AG04450 (cell line): ENCODE measurements at regions of chr14 and their contacts with region 1.

Region 1: DNA sequence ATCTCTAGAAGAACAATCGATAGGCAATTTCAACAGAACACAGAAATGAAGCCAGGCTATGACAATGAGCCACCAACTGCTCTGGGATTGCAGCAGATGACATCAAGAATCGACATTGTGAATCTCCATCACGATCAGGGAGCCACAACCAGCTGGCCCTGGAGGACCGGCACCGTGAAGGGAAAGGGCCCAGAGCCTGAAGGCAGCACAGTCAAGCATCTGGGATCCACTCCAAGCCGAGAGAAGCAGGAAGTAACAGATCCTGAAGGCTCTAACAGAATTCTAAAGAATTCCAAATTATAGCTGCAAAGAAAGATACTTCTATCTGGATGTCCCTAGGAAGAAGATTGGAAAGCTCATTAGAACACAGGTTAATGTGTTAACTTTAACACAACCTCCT is 61.0 kb downstream of the LRRC74A start:
- DNase-seq: no peak
- H3K4me3 ChIP-seq: no peak overlapping the region
- H3K27ac ChIP-seq: no peak overlapping the region
- H3K27me3 ChIP-seq: peaks cover 7% of the 10 kb centered on the region
- CTCF ChIP-seq: no peak

Region 2: DNA sequence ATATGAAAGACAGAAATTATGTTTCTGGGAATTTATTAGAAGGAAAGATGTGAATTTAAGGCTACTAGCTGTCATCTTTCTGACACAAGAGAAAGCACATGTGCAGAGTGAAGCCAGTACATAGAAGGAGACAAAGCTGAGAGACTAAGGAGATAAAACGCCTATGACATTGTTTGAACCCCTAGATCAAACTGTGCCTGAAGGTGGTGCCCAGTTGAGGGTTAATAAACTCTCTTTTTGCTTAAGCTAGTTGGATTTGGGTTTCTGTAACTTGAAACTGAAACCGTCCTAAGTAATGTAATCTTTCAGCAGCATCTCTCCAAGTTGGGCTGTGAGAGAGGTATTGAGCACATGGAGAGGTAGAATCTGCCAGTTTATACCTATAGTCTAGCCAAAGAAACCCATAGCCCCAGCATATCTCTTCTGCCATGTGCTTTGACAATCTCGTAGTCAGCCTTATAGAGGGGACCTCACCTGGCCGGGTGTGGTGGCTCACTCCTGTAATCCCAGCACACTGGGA is 23.2 kb after region 1 on chr14:
- CTCF ChIA-PET with region 1: interaction called, 16 read pairs
- POLR2A ChIA-PET with region 1: interaction called, 12 read pairs
- DNase-seq: no peak
- H3K4me3 ChIP-seq: no peak overlapping the region
- H3K27ac ChIP-seq: no peak overlapping the region
- H3K27me3 ChIP-seq: no peaks in the 10 kb centered on the region
- CTCF ChIP-seq: no peak